ENCODE measurements at regions of chr20 and their contacts with region 1.

Region 1: DNA sequence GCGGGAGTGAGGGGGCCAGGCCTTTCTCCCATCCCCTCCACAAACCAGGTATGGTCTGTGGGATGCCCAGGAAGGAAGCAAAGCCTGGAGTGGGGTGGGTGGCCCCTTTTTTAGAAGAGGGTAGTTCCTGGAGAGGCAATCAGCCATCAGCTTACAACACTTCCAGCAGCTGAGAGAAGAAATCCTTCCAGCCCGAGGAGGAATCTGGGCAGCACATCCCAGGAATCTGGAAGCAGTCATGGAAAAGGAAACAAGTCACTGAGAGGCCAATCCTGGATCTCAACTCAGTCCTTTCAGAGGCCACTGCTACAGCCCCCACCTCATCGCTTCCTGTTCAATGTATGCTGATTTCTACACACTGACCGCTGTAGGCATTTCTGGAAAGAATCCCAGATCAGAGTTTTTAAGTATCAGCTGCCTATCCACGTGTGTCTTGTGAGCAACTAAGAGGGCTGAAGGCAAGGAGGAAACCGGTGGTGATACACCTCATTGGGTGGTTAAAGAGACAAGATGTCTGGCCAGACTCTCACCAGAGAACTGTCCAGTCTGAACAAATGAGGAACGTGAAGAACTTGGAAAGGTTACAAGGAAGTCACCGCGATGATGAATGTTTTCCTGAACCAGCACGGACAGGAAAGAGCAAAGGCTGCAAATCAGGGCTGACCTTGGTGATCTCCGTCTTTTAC is 92.9 kb upstream of the SHLD1 start:
- DNase-seq: peak; percentile 78 to 98
- H3K4me3 ChIP-seq: peak overlapping the region; percentile 3; the same call in 1 of the 2 replicates
- H3K27ac ChIP-seq: peak overlapping the region; percentile 90
- H3K4me1 ChIP-seq: peaks cover 60% of the 10 kb centered on the region
- H3K27me3 ChIP-seq: no peaks in the 10 kb centered on the region
- CTCF ChIP-seq: no peak

Region 2: DNA sequence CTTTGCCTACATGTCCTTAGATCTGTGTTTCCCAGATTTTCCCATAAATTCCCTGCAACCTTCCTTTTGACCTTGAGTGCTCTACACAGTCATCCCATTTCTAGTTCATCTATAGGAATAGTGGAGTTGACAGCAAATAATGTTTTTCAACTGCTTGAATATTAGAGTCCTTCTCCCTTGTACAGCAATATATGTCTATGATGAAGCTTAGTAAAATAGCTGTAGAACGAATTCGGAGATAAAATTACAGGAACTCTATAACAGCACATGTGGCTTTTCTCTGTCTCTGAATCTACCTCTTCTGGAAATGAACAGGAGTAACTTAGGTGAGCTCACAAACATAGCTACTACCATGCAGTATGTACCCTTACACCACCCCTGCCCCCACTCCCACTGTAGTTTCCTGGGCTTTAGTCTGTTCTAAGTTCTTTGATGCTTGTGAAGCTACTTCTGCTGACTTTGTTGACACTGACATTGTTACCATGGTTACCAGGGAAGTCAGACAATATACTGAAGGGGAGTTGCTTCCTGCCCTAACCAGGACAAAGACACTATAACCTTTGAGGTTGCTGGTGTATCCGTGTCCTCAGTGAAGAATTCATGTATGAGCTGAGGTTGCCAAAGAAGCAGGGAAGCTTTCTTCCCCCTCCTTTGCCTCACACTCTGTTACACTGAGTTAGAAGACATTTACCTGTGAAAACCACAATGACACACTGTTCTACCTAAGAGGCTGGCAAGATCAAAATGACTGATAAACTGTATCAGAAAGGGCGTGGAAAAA is 57.1 kb after region 1 on chr20:
- CTCF ChIA-PET with region 1: no interaction called
- POLR2A ChIA-PET with region 1: interaction called, 9 read pairs
- intact Hi-C with region 1: loop called (anchors 2 kb)
- DNase-seq: peak; percentile 47 to 92
- H3K4me3 ChIP-seq: no peak overlapping the region
- H3K27ac ChIP-seq: no peak overlapping the region
- H3K4me1 ChIP-seq: peaks cover 19% of the 10 kb centered on the region
- H3K27me3 ChIP-seq: no peaks in the 10 kb centered on the region
- CTCF ChIP-seq: no peak

Region 3: GRCh38 chr20:5766085-5766764 is 108.9 kb after region 1 on chr20:
- CTCF ChIA-PET with region 1: no interaction called
- POLR2A ChIA-PET with region 1: interaction called, 24 read pairs
- intact Hi-C with region 1: no loop called
- DNase-seq: no peak
- H3K4me3 ChIP-seq: no peak overlapping the region
- H3K27ac ChIP-seq: no peak overlapping the region
- H3K4me1 ChIP-seq: peaks cover 17% of the 10 kb centered on the region
- H3K27me3 ChIP-seq: no peaks in the 10 kb centered on the region
- CTCF ChIP-seq: no peak

Region 4: GRCh38 chr20:5781798-5782750 is 124.7 kb after region 1 on chr20:
- CTCF ChIA-PET with region 1: no interaction called
- POLR2A ChIA-PET with region 1: no interaction called
- intact Hi-C with region 1: loop called (anchors 2 kb)
- DNase-seq: peak in 1 of 2 experiments; percentile 30
- H3K4me3 ChIP-seq: no peak overlapping the region
- H3K27ac ChIP-seq: no peak overlapping the region
- H3K4me1 ChIP-seq: peaks cover 35% of the 10 kb centered on the region
- H3K27me3 ChIP-seq: no peaks in the 10 kb centered on the region
- CTCF ChIP-seq: no peak